ENCODE measurements at regions of chr4 and their contacts with region 1.

Region 1: DNA sequence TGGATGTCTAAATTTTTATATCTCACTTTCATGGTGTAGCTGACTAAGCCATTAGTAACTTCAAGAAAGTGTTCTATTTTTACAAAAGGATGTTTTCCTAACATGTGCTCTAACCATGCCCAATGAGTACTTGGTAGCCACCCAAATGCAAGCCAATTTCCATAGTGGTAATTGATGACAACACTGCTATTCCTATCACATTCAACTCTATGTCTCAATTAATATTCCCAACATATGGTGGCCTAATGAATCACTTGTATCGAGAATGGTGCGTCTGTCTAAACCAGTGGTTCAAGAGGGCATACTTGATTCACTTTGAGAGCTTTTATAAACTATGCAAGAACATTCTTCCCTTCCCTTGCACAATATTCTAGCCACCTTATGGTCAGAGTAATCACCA is 112.9 kb upstream of the GPRIN3 start:
- DNase-seq: no peak
- ATAC-seq: no peak
- H3K4me3 ChIP-seq: no peak overlapping the region
- H3K4me3 Mint-ChIP-seq: no peak overlapping the region
- H3K27ac ChIP-seq: no peak overlapping the region
- H3K27ac Mint-ChIP-seq: no peak overlapping the region
- H3K4me1 ChIP-seq: no peaks in the 10 kb centered on the region
- H3K4me1 Mint-ChIP-seq: no peaks in the 10 kb centered on the region
- H3K27me3 ChIP-seq: no peaks in the 10 kb centered on the region
- H3K27me3 Mint-ChIP-seq: peaks cover 0 to 3% (median 0%) of the 10 kb centered on the region in 5 donors

Region 2: GRCh38 chr4:89382439-89382838 is 38.1 kb before region 1 on chr4:
- CTCF ChIA-PET with region 1: no interaction called
- POLR2A ChIA-PET with region 1: no interaction called
- intact Hi-C with region 1: no loop called
- DNase-seq: no peak
- ATAC-seq: no peak
- H3K4me3 ChIP-seq: no peak overlapping the region
- H3K4me3 Mint-ChIP-seq: no peak overlapping the region
- H3K27ac ChIP-seq: no peak overlapping the region
- H3K27ac Mint-ChIP-seq: no peak overlapping the region
- H3K4me1 ChIP-seq: no peaks in the 10 kb centered on the region
- H3K4me1 Mint-ChIP-seq: peaks cover 0 to 3% (median 0%) of the 10 kb centered on the region in 7 donors
- H3K27me3 ChIP-seq: no peaks in the 10 kb centered on the region
- H3K27me3 Mint-ChIP-seq: no peaks in the 10 kb centered on the region

Region 3: DNA sequence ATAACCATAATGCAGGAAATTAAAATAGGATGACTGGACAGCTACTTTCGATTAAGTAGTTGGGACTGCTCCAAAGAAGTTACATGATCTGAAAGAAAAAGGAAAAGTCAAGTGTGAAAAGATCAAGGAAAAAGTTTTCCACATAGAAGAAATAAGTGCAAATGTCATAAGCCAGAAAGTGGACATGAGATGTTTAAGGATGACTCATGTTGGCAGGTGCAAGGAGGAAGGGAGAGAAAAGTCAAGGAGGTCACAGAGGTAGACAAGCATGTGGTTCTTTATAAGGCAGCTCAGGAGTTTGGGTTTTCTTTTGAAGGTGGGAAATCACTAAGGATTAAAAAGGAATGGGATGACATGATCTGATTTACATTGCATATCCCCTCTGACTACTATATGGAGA is 23.0 kb before region 1 on chr4:
- CTCF ChIA-PET with region 1: no interaction called
- POLR2A ChIA-PET with region 1: no interaction called
- intact Hi-C with region 1: loop called in 1 of 2 experiments (anchors 2 kb)
- DNase-seq: no peak
- ATAC-seq: no peak
- H3K4me3 ChIP-seq: no peak overlapping the region
- H3K4me3 Mint-ChIP-seq: no peak overlapping the region
- H3K27ac ChIP-seq: no peak overlapping the region
- H3K27ac Mint-ChIP-seq: no peak overlapping the region
- H3K4me1 ChIP-seq: no peaks in the 10 kb centered on the region
- H3K4me1 Mint-ChIP-seq: no peaks in the 10 kb centered on the region
- H3K27me3 ChIP-seq: no peaks in the 10 kb centered on the region
- H3K27me3 Mint-ChIP-seq: no peaks in the 10 kb centered on the region

Region 4: DNA sequence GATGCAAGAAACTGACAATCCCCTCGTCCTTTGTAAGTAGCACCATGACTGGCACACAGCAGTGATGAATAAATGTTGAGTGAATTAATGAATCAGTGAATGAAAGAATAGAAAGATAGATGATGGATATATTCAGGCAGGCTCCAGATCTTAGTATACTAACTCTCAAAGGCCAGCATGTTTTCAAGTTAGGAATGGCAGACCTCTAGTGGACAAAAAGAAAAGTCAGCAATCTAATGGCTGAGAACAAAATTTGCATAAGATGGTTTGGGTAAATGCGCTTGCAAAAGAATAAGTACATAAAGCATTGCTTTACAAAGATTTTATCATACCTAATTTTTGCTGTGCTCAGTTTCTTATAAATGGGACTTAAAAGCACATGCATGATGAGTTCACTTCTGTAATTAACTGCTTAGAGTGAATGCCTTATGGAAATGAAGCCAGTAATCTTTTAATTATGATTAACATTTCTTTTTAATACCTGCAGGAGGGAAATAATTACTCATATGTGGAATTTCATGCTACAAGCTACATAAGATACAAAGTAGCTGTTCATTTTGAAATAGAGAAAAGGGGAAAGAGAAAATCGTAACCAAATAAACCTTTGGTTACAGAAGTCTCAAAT is 14.0 kb after region 1 on chr4:
- CTCF ChIA-PET with region 1: no interaction called
- POLR2A ChIA-PET with region 1: no interaction called
- intact Hi-C with region 1: no loop called
- DNase-seq: peak in 6 of 9 donors; percentile 28 to 61 (median 45)
- ATAC-seq: peak; percentile 72
- H3K4me3 ChIP-seq: no peak overlapping the region
- H3K4me3 Mint-ChIP-seq: no peak overlapping the region
- H3K27ac ChIP-seq: no peak overlapping the region
- H3K27ac Mint-ChIP-seq: peak overlapping the region in 1 of 9 donors; percentile 14
- H3K4me1 ChIP-seq: no peaks in the 10 kb centered on the region
- H3K4me1 Mint-ChIP-seq: peaks cover 8 to 23% (median 13%) of the 10 kb centered on the region in 7 donors
- H3K27me3 ChIP-seq: no peaks in the 10 kb centered on the region
- H3K27me3 Mint-ChIP-seq: no peaks in the 10 kb centered on the region